Posterior cingulate gyrus (tissue), 11 donors: ENCODE measurements at regions of chr14 and their contacts with region 1.

Region 1: GRCh38 chr14:30214461-30215090 is 286.9 kb upstream of the PRKD1 start:
- DNase-seq: peak in 3 of 10 donors; percentile 3 to 61 (median 8)

Region 2: GRCh38 chr14:30005114-30005808 is 209.3 kb before region 1 on chr14:
- intact Hi-C with region 1: loop called (anchors 10 kb)
- DNase-seq: no peak

Region 3: DNA sequence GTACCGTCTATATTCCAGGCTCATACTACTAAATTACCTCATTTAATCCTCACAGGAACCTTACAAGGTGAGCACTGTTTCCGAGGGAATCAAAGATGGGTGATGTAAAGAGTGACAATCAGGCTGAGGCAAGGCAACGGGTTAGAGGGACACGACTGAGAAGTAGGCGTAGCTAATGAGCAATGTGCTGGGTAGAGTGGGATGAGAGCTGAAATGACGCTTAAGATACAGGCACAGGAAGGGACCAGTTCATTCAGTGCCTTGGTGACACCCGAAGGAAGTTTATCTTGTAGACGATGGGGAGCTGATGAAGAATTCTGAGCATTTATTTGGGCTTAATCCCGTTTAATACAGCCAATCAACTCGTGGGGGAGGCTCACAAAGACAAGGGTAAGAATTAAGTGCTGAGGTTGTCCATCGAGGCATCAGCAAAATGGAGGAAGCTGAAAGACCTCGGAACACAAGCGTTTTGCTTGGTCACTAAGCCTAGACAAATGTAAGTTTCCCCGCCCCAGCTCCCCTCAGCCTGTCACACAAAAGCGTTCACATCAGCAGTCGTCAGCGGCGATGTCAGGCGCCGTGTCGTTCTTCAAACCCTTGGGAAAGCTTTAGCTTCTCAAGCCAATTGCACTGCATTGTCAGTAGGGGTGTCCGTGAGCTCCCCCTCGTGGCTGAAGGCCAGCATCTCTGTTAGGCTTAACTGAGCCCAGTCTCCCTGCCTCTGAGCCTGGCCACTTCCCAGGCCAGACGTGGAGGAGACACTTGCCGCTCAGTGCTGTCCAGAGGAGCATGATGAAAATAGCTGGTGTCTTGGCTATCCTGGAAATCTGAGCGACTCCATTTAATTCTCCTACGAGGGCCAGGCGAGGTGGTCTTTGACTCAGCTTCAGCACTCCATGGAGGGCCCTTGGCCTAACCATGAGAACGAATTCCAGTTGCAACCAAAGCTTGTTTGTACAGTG is 55.9 kb after region 1 on chr14:
- intact Hi-C with region 1: no loop called
- DNase-seq: peak; percentile 48 to 96 (median 82)